PC-3 (cell line): ENCODE measurements at regions of chr2 and their contacts with region 1.

Region 1: GRCh38 chr2:65432227-65433190 is at the start of gene SPRED2:
- DNase-seq: peak; percentile 95
- ATAC-seq: peak; percentile 18
- H3K4me3 ChIP-seq: peak within 1 kb of the TSS; percentile 99
- H3K27ac ChIP-seq: peak within 1 kb of the TSS; percentile 68
- H3K4me1 ChIP-seq: peaks cover 25% of the 10 kb centered on the region
- H3K27me3 ChIP-seq: no peaks in the 10 kb centered on the region
- CTCF ChIP-seq: no peak
- total RNA-seq, gene SPRED2: 16.2 and 18.1 TPM in 2 replicates

Region 2: GRCh38 chr2:65264821-65265670 is 167.5 kb before region 1 on chr2:
- CTCF ChIA-PET with region 1: no interaction called
- POLR2A ChIA-PET with region 1: no interaction called
- intact Hi-C with region 1: loop called (anchors 2 kb)
- DNase-seq: peak; percentile 74
- ATAC-seq: peak; percentile 70
- H3K4me3 ChIP-seq: no peak overlapping the region
- H3K27ac ChIP-seq: no peak overlapping the region
- H3K4me1 ChIP-seq: peaks cover 19% of the 10 kb centered on the region; the same call in 1 of the 2 replicates
- H3K27me3 ChIP-seq: no peaks in the 10 kb centered on the region
- CTCF ChIP-seq: peak; percentile 88

Region 3: DNA sequence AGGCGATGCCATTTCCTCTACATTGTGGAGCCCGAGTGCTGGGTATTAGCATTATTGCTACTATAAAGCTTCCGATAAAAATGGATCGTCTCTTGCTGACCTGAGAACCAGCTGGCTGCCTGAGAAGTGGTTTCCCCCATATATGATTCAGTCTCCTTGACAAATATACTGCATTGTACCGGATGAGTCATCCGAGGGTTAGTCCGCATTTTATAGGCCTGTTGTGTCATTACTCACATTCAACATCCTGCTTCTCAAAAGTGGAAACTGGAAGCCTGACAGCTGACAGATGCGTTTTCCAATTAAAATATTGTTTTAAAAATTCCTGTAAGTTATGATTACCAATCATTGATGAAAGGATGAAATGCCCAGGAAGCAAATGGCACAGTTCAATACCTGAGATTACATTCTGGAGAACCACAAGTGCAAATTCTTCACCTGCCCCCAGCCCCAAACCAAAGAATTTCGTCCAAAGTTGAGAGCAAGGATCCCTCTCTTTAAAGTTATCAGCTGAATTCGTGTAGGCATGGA is 65.8 kb before region 1 on chr2:
- CTCF ChIA-PET with region 1: no interaction called
- POLR2A ChIA-PET with region 1: interaction called, 7 read pairs
- intact Hi-C with region 1: loop called (anchors 1 kb)
- DNase-seq: peak; percentile 99
- ATAC-seq: peak; percentile 77
- H3K4me3 ChIP-seq: peak overlapping the region; percentile 66
- H3K27ac ChIP-seq: peak overlapping the region; percentile 98
- H3K4me1 ChIP-seq: peaks cover 64% of the 10 kb centered on the region
- H3K27me3 ChIP-seq: no peaks in the 10 kb centered on the region
- CTCF ChIP-seq: no peak

Region 4: DNA sequence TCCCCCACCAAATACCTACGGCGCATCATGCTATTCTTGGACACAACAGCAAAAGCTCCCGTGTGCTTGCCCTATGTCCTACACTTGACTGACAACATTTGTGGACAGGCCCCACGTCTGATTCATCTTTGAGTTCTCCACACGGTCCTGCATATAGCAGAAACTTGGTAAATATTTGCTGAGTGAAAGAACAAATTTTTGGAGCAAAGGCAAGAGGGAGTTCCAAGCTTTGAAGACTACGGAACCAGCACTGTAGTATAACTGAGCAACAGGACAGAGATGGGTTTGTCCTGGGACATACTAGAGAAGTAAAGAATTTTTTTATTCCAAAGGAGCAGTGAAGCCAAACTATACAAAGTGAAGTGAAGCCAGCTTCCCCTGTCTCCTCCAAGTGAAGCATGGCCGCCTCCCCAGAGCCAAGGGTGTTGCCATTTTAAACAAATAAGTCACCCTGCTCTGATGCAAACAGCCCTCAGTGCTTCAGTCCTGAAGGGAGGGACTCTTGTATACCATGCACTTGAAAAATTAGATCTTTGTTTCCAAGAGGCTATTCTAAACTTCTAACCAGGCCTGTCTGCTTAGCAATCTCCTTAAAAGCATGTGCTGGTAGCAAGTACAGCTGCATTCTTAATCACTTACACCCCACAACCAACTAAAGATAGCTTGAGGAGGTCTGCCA is 36.0 kb before region 1 on chr2:
- CTCF ChIA-PET with region 1: interaction called, 12 read pairs
- POLR2A ChIA-PET with region 1: interaction called, 6 read pairs
- intact Hi-C with region 1: loop called (anchors 1 kb)
- DNase-seq: peak; percentile 84
- ATAC-seq: peak; percentile 84
- H3K4me3 ChIP-seq: peak overlapping the region; percentile 58
- H3K27ac ChIP-seq: peak overlapping the region; percentile 94
- H3K4me1 ChIP-seq: peaks cover 39% of the 10 kb centered on the region
- H3K27me3 ChIP-seq: no peaks in the 10 kb centered on the region
- CTCF ChIP-seq: no peak

Region 5: GRCh38 chr2:65554765-65555591 is 122.5 kb after region 1 on chr2:
- CTCF ChIA-PET with region 1: no interaction called
- POLR2A ChIA-PET with region 1: interaction called, 5 read pairs
- intact Hi-C with region 1: loop called (anchors 2 kb)
- DNase-seq: peak; percentile 39
- ATAC-seq: peak; percentile 45
- H3K4me3 ChIP-seq: no peak overlapping the region
- H3K27ac ChIP-seq: no peak overlapping the region
- H3K4me1 ChIP-seq: peaks cover 5% of the 10 kb centered on the region
- H3K27me3 ChIP-seq: no peaks in the 10 kb centered on the region
- CTCF ChIP-seq: no peak